Aorta (tissue), 5 donors: ENCODE measurements at regions of chr11 and their contacts with region 1.

Region 1: DNA sequence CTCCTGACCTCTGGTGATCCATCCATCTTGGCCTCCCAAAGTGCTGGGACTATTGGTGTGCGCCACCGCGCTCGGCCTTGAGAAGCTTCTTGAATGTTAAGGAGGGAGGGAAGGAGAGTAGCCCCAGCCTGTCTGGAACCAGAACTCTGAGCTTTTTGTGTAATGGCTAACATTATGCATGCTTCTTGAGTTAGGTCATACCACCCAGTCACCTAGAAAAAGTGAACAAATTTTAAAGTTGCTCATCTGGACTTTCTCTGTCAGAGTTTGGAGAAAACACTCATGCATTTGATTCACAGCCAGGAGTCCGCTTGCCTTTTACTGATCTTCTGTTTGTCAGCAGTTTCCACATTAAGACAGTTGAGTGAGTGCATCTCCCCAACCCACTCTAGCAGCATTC is 82.1 kb downstream of the PPP6R3 start:
- DNase-seq: no peak
- ATAC-seq: peak; percentile 57
- H3K4me3 ChIP-seq: no peak overlapping the region
- H3K27ac ChIP-seq: no peak overlapping the region
- H3K4me1 ChIP-seq: no peaks in the 10 kb centered on the region
- H3K27me3 ChIP-seq: no peaks in the 10 kb centered on the region

Region 2: DNA sequence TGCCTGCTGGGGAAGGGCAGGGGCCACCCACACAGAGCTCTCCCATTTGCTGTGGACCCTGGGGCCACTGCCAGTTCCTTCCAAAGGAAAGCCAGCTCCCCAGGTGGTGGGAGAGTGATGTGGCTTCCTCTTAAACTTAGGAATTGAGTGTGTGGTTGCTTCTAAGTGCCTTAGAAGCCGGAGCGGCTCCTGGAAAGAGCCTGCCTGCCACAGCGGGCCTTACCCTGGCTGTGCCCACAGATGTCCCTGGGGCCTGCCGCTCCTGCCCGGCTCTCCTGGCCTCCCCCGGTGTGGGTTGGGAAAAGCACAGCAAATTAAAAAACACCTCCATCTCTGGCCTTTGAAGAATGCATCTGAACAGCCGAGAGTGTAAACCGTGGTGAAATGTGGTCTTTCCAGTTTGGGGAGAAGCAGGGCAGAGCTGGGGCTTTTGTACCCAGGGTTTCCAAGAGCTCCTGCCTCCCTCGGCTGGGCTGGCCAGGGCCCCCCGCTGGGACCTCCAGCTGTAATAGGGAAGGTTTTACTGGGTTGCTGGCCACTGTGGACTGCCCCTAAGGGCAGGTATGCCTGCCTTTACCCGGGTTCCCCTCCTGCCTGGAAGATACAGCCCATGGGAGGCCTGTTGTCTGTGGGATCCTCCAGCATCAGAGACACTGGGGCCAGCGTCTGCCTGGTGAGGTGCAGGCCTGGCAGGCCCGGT is 200.0 kb before region 1 on chr11:
- intact Hi-C with region 1: no loop called
- DNase-seq: no peak
- ATAC-seq: no peak
- H3K4me3 ChIP-seq: no peak overlapping the region
- H3K27ac ChIP-seq: peak overlapping the region; percentile 30 to 79
- H3K4me1 ChIP-seq: peaks cover 0 to 4% of the 10 kb centered on the region in 2 donors
- H3K27me3 ChIP-seq: no peaks in the 10 kb centered on the region

Region 3: DNA sequence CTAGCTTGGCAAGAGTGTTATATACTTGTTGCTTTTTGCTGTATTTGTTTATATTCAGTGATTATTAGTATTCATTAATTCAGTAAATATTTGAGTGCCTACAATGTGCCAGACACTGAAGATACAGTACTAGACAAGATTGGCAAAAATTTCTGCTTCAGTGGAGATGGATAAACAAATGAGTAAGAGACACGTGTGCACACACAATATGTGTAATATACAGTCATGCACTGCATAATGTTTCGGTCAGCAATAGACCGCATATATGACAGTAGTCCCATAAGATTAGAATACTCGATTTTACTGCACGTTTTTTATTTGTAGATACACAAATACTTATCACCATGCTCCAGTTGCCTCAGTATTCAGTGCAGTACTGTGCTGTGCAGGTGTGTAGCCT is 36.8 kb after region 1 on chr11:
- intact Hi-C with region 1: loop called in 1 of 2 experiments (anchors 5 kb)
- DNase-seq: no peak
- ATAC-seq: no peak
- H3K4me3 ChIP-seq: no peak overlapping the region
- H3K27ac ChIP-seq: no peak overlapping the region
- H3K4me1 ChIP-seq: peaks cover 2 to 18% of the 10 kb centered on the region in 2 donors
- H3K27me3 ChIP-seq: no peaks in the 10 kb centered on the region